CD4-positive, alpha-beta T cell (primary cell): ENCODE measurements at regions of chr15 and their contacts with region 1.

Region 1: DNA sequence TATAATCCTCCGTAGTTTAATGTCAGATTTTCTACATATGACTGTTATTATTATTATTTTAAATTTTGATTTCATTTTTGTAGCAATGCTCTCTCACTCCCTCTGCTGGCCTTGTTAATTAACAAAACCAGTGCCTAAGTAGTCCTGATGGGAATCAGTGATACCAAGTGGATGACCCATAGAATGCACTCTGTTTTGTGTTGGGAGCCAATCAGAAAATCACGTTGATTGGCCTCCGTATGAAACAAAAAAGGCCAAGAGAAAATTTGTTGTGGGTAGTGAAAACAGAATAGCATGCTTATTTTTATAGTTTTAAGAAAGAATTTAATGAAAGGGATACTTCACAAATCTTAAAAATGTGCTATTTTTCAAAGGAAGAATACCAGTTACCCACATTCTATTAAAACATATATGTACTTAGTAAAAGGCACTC is 34.4 kb upstream of the MEIS2 start:
- DNase-seq: peak in 2 of 14 experiments; percentile 12 to 17
- ATAC-seq: no peak
- H3K4me3 ChIP-seq: no peak overlapping the region
- H3K4me3 Mint-ChIP-seq: no peak overlapping the region
- H3K27ac ChIP-seq: no peak overlapping the region
- H3K27ac Mint-ChIP-seq: no peak overlapping the region
- H3K4me1 ChIP-seq: no peaks in the 10 kb centered on the region
- H3K4me1 Mint-ChIP-seq: no peaks in the 10 kb centered on the region
- H3K27me3 ChIP-seq: peaks cover 2 to 4% of the 10 kb centered on the region in 2 experiments
- H3K27me3 Mint-ChIP-seq: peaks cover 10% of the 10 kb centered on the region
- CTCF ChIP-seq: peak; percentile 62

Region 2: DNA sequence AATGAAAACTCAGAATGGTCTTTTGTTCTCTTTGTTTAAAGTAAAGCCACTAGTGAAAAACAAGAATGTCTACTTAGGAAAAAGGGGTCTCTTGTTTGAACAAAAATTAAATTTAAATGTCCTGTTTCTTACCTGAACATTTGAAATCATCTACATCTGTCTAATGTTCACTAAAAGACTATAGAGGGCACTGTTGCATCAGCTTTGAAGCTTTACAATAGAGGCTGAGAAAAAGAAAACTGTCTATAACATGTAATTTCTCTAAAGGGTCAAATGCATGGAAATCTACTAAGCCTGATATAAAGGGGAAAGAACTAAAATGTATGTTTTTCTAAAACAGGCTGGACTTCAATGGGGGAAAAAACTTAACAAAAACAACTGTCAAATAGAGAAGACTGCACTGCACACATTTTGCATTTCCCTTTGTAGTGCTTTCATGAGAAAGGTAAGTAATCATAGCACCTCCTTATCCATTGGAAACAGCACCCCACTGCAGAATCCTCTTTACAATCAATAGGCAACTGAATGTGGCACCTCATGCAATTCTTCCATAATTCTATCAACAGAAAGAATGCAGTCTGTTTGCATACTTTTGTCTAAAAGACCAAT is 1615.1 kb before region 1 on chr15:
- CTCF ChIA-PET with region 1: no interaction called
- POLR2A ChIA-PET with region 1: no interaction called
- intact Hi-C with region 1: loop called in 1 of 2 experiments (anchors 2 kb)
- DNase-seq: peak in 3 of 14 experiments; percentile 53 to 64 (median 63)
- ATAC-seq: no peak
- H3K4me3 ChIP-seq: no peak overlapping the region
- H3K4me3 Mint-ChIP-seq: no peak overlapping the region
- H3K27ac ChIP-seq: no peak overlapping the region
- H3K27ac Mint-ChIP-seq: no peak overlapping the region
- H3K4me1 ChIP-seq: no peaks in the 10 kb centered on the region
- H3K4me1 Mint-ChIP-seq: peaks cover 3% of the 10 kb centered on the region
- H3K27me3 ChIP-seq: no peaks in the 10 kb centered on the region
- H3K27me3 Mint-ChIP-seq: no peaks in the 10 kb centered on the region
- CTCF ChIP-seq: peak; percentile 82

Region 3: GRCh38 chr15:36501063-36501678 is 633.5 kb before region 1 on chr15:
- CTCF ChIA-PET with region 1: no interaction called
- POLR2A ChIA-PET with region 1: no interaction called
- intact Hi-C with region 1: loop called (anchors 5 to 10 kb)
- DNase-seq: peak in 3 of 14 experiments; percentile 21 to 31 (median 28)
- ATAC-seq: no peak
- H3K4me3 ChIP-seq: no peak overlapping the region
- H3K4me3 Mint-ChIP-seq: no peak overlapping the region
- H3K27ac ChIP-seq: no peak overlapping the region
- H3K27ac Mint-ChIP-seq: no peak overlapping the region
- H3K4me1 ChIP-seq: no peaks in the 10 kb centered on the region
- H3K4me1 Mint-ChIP-seq: no peaks in the 10 kb centered on the region
- H3K27me3 ChIP-seq: peaks cover 0 to 10% of the 10 kb centered on the region in 2 experiments
- H3K27me3 Mint-ChIP-seq: peaks cover 34% of the 10 kb centered on the region
- CTCF ChIP-seq: peak; percentile 42

Region 4: DNA sequence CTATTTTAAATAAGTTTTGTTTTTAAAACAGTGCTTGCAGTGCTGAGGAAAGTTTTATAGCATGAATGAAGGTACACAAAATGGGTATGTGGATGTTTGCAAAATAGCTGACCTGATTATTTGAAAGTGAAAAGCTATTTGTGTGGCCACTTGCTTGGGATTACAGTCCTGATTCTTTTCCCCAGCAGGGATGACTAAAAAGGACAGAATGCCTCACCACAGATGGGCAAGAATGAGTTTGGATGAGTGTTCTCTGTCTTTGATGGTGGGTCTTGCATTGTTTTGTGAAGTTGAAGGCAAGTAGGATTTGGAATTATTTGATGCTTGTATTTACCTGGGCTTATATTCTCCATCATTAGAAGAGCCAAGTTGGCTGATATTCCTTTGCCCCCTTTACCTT is 14.4 kb after region 1 on chr15:
- CTCF ChIA-PET with region 1: no interaction called
- POLR2A ChIA-PET with region 1: no interaction called
- intact Hi-C with region 1: no loop called
- DNase-seq: no peak
- ATAC-seq: no peak
- H3K4me3 ChIP-seq: no peak overlapping the region
- H3K4me3 Mint-ChIP-seq: no peak overlapping the region
- H3K27ac ChIP-seq: no peak overlapping the region
- H3K27ac Mint-ChIP-seq: no peak overlapping the region
- H3K4me1 ChIP-seq: no peaks in the 10 kb centered on the region
- H3K4me1 Mint-ChIP-seq: no peaks in the 10 kb centered on the region
- H3K27me3 ChIP-seq: no peaks in the 10 kb centered on the region
- H3K27me3 Mint-ChIP-seq: no peaks in the 10 kb centered on the region
- CTCF ChIP-seq: no peak